MCF 10A (cell line): ENCODE measurements at regions of chr3 and their contacts with region 1.

Region 1: DNA sequence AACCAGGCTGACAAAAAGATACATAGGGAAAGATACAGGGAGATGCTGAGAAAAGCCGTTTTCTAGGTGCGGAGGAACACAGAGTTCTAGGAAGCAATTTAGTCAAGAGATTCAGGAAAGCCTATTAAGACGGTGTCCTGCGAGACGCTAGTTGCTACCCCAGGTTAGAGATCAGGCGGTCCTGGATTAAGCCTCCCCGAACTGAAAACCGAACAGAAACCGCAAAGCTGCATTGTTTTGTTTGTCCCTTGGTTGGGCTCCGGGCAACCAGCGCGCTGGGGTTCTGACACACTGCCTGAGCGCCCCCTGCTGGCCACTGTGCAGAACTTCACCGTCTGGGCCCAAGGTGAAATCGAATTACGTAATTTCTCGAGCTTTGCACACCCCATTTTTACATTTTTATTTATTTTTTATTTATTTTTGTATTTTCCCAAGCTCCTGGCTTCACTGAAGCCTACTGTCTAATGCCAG is 37.3 kb upstream of the NDUFB4 start:
- DNase-seq: peak; percentile 84
- H3K4me3 Mint-ChIP-seq: peak overlapping the region; percentile 78
- H3K27ac Mint-ChIP-seq: peak overlapping the region; percentile 92
- H3K4me1 Mint-ChIP-seq: peaks cover 22% of the 10 kb centered on the region
- H3K27me3 Mint-ChIP-seq: no peaks in the 10 kb centered on the region
- CTCF ChIP-seq: peak; percentile 97

Region 2: GRCh38 chr3:120245386-120245785 is 313.4 kb before region 1 on chr3:
- CTCF ChIA-PET with region 1: interaction called, 42 read pairs
- POLR2A ChIA-PET with region 1: no interaction called
- intact Hi-C with region 1: loop called (anchors 1 kb)
- DNase-seq: no peak
- H3K4me3 Mint-ChIP-seq: no peak overlapping the region
- H3K27ac Mint-ChIP-seq: no peak overlapping the region
- H3K4me1 Mint-ChIP-seq: no peaks in the 10 kb centered on the region
- H3K27me3 Mint-ChIP-seq: no peaks in the 10 kb centered on the region
- CTCF ChIP-seq: no peak

Region 3: DNA sequence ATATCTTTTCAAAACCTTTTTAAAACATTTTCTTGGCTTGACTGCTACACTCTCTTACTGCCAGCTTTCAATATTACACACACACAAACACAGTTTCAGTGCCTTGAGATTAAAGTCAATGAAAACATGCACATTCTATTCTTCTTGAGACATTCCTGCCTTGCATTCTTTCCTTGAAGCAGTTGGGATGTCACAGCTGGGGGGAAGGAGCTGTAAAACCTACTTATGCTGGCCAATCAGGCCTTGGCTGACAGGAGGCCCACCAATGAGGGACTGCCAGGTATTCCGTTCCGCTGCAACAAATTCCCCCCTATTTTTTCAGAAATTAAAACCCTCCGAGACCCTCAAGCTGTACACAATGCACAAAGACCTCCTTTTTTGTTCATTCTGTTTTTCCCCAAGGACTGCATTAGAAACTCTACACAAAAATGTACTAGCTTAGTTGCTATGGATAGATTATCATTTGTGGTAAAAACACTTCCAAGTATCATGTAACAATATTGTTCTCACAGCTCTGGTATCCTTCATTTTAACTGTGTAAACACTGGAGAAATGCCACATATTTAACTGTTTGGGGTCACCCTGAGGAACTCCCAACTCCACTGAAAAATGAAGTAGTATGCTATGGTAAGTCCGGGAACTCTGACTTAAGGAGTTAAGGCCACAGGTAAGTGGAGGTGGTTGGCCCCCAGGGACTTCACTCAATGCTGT is 126.5 kb before region 1 on chr3:
- CTCF ChIA-PET with region 1: interaction called, 12 read pairs
- POLR2A ChIA-PET with region 1: interaction called, 3 read pairs
- intact Hi-C with region 1: no loop called
- DNase-seq: no peak
- H3K4me3 Mint-ChIP-seq: no peak overlapping the region
- H3K27ac Mint-ChIP-seq: no peak overlapping the region
- H3K4me1 Mint-ChIP-seq: peaks cover 22% of the 10 kb centered on the region
- H3K27me3 Mint-ChIP-seq: no peaks in the 10 kb centered on the region
- CTCF ChIP-seq: no peak

Region 4: GRCh38 chr3:120512655-120513054 is 46.2 kb before region 1 on chr3:
- CTCF ChIA-PET with region 1: interaction called, 10 read pairs
- POLR2A ChIA-PET with region 1: no interaction called
- intact Hi-C with region 1: no loop called
- DNase-seq: no peak
- H3K4me3 Mint-ChIP-seq: no peak overlapping the region
- H3K27ac Mint-ChIP-seq: no peak overlapping the region
- H3K4me1 Mint-ChIP-seq: no peaks in the 10 kb centered on the region
- H3K27me3 Mint-ChIP-seq: no peaks in the 10 kb centered on the region
- CTCF ChIP-seq: no peak

Region 5: GRCh38 chr3:120596116-120596852 is 37.5 kb after region 1 on chr3 and contains the start of gene NDUFB4:
- CTCF ChIA-PET with region 1: interaction called, 12 read pairs
- POLR2A ChIA-PET with region 1: interaction called, 8 read pairs
- intact Hi-C with region 1: no loop called
- DNase-seq: peak; percentile 99
- H3K4me3 Mint-ChIP-seq: peak within 1 kb of the TSS; percentile 92
- H3K27ac Mint-ChIP-seq: peak within 1 kb of the TSS; percentile 95
- H3K4me1 Mint-ChIP-seq: peaks cover 5% of the 10 kb centered on the region
- H3K27me3 Mint-ChIP-seq: peaks cover 11% of the 10 kb centered on the region
- CTCF ChIP-seq: no peak
- total RNA-seq, gene NDUFB4: 96.1 and 113 TPM in 2 replicates

Region 6: GRCh38 chr3:120795017-120795648 is 236.3 kb after region 1 on chr3:
- CTCF ChIA-PET with region 1: interaction called, 111 read pairs
- POLR2A ChIA-PET with region 1: no interaction called
- intact Hi-C with region 1: loop called (anchors 1 kb)
- DNase-seq: peak; percentile 87
- H3K4me3 Mint-ChIP-seq: no peak overlapping the region
- H3K27ac Mint-ChIP-seq: no peak overlapping the region
- H3K4me1 Mint-ChIP-seq: peaks cover 8% of the 10 kb centered on the region
- H3K27me3 Mint-ChIP-seq: no peaks in the 10 kb centered on the region
- CTCF ChIP-seq: peak; percentile 87

Region 7: DNA sequence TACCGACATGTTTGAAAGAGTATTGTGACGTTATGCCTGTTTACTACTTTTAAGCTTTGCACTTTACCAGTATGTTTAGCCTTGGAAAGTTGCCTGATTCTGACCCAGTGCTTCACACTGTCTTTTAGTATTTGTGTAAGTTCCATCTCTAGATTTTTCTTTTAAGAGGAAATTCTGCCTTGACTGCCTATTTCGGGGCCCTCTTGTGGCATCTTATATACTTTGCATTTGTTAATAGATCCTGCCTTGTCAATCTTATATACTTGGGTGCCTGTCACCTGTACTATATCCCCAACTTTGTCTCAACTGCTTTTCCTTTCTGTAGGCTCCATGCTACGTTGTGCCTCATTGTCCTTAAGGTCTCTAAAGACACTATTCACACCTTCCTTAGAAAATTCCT is 593.8 kb after region 1 on chr3:
- CTCF ChIA-PET with region 1: interaction called, 4 read pairs
- POLR2A ChIA-PET with region 1: no interaction called
- intact Hi-C with region 1: loop called (anchors 1 kb)
- DNase-seq: peak; percentile 30
- H3K4me3 Mint-ChIP-seq: no peak overlapping the region
- H3K27ac Mint-ChIP-seq: no peak overlapping the region
- H3K4me1 Mint-ChIP-seq: peaks cover 8% of the 10 kb centered on the region
- H3K27me3 Mint-ChIP-seq: no peaks in the 10 kb centered on the region
- CTCF ChIP-seq: peak; percentile 26